AG04449 (cell line): ENCODE measurements at regions of chr6 and their contacts with region 1.

Region 1: GRCh38 chr6:16332175-16332542 is 93.8 kb downstream of the GMPR start:
- DNase-seq: no peak
- H3K4me3 ChIP-seq: no peak overlapping the region
- CTCF ChIP-seq: peak; percentile 73

Region 2: DNA sequence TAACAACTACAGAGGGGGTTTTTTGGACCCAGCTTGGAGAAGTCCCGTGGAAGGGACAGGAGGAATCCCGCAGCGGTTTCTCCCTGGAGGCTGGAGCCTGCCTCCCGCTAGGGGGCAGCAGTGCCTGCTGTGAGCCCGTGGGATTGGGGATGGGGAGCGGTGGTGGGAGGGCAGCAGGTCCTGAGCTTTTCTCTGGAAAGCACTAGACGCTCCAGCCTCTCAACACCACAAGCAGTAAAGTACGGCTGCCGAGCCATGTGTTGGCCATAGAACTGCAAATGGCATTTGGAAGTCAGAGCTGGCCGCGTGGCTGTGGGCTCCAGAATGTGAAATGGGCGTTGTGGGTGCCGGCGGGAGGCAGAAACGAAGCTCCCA is 46.0 kb before region 1 on chr6:
- CTCF ChIA-PET with region 1: interaction called, 36 read pairs
- POLR2A ChIA-PET with region 1: no interaction called
- DNase-seq: no peak
- H3K4me3 ChIP-seq: peak overlapping the region; percentile 25; the same call in 1 of the 2 replicates
- CTCF ChIP-seq: peak; percentile 95

Region 3: GRCh38 chr6:16319813-16320532 is 12.2 kb before region 1 on chr6:
- CTCF ChIA-PET with region 1: interaction called, 163 read pairs
- POLR2A ChIA-PET with region 1: interaction called, 3 read pairs
- DNase-seq: no peak
- H3K4me3 ChIP-seq: peak overlapping the region; percentile 57
- CTCF ChIP-seq: no peak

Region 4: GRCh38 chr6:16355699-16356446 is 23.7 kb after region 1 on chr6:
- CTCF ChIA-PET with region 1: interaction called, 24 read pairs
- POLR2A ChIA-PET with region 1: no interaction called
- DNase-seq: no peak
- H3K4me3 ChIP-seq: no peak overlapping the region
- CTCF ChIP-seq: no peak

Region 5: GRCh38 chr6:16403831-16404230 is 71.7 kb after region 1 on chr6:
- CTCF ChIA-PET with region 1: interaction called, 65 read pairs
- POLR2A ChIA-PET with region 1: no interaction called
- DNase-seq: no peak
- H3K4me3 ChIP-seq: no peak overlapping the region
- CTCF ChIP-seq: no peak

Region 6: DNA sequence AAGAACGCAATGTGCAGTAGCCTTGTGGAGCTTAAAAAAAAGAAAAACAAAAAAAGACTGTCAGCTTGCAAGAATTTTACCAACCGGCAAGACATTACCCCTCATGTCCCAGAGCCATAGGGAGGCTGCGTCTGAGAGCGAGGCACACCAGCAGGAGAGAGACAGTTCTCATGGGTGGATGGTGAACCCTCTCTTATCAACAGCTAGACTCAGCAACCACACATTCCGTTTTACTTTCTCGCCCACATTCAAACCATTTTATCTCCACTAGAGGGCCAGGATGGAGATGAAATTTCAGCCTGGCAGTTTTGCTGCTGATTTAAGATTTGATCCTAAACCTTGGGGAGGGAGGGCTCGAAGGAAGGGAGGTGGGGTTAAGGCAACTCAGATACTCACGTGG is 182.1 kb after region 1 on chr6:
- CTCF ChIA-PET with region 1: interaction called, 58 read pairs
- POLR2A ChIA-PET with region 1: no interaction called
- DNase-seq: no peak
- H3K4me3 ChIP-seq: no peak overlapping the region
- CTCF ChIP-seq: peak; percentile 51

Region 7: GRCh38 chr6:16690608-16691198 is 358.5 kb after region 1 on chr6:
- CTCF ChIA-PET with region 1: no interaction called
- POLR2A ChIA-PET with region 1: no interaction called
- DNase-seq: no peak
- H3K4me3 ChIP-seq: no peak overlapping the region
- CTCF ChIP-seq: no peak

Region 8: GRCh38 chr6:16770701-16771569 is 438.8 kb after region 1 on chr6:
- CTCF ChIA-PET with region 1: interaction called, 13 read pairs
- POLR2A ChIA-PET with region 1: no interaction called
- DNase-seq: no peak
- H3K4me3 ChIP-seq: no peak overlapping the region
- CTCF ChIP-seq: peak; percentile 90